Activated CD8-positive, alpha-beta T cell treated with anti-CD3 and anti-CD28 coated beads, Interleukin-2, amount 10 ng/mL, durations not matched to agents 7 days and 5 days (primary cell): ENCODE measurements at regions of chr5 and their contacts with region 1.

Region 1: GRCh38 chr5:133996683-133997252 is 8.0 kb downstream of the VDAC1 start:
- DNase-seq: no peak
- ATAC-seq: no peak
- H3K4me3 Mint-ChIP-seq: no peak overlapping the region
- H3K27ac Mint-ChIP-seq: peak overlapping the region; percentile 67
- H3K4me1 Mint-ChIP-seq: peaks cover 60% of the 10 kb centered on the region
- H3K27me3 Mint-ChIP-seq: no peaks in the 10 kb centered on the region

Region 2: GRCh38 chr5:133977161-133977787 is 19.5 kb before region 1 on chr5:
- CTCF ChIA-PET with region 1: interaction called, 56 read pairs
- POLR2A ChIA-PET with region 1: no interaction called
- DNase-seq: no peak
- ATAC-seq: no peak
- H3K4me3 Mint-ChIP-seq: no peak overlapping the region
- H3K27ac Mint-ChIP-seq: peak overlapping the region; percentile 14
- H3K4me1 Mint-ChIP-seq: peaks cover 17% of the 10 kb centered on the region
- H3K27me3 Mint-ChIP-seq: no peaks in the 10 kb centered on the region